Breast epithelium (tissue), 4 donors: ENCODE measurements at regions of chr3 and their contacts with region 1.

Region 1: GRCh38 chr3:38634111-38634510 is 15.4 kb downstream of the SCN5A start:
- DNase-seq: no peak
- H3K4me3 ChIP-seq: no peak overlapping the region
- H3K27ac ChIP-seq: no peak overlapping the region
- H3K4me1 ChIP-seq: no peaks in the 10 kb centered on the region
- H3K27me3 ChIP-seq: peaks cover 0 to 9% of the 10 kb centered on the region in 2 donors
- CTCF ChIP-seq: no peak
- POLR2A ChIP-seq: no peak

Region 2: GRCh38 chr3:38327335-38328009 is 306.6 kb before region 1 on chr3:
- intact Hi-C with region 1: no loop called
- DNase-seq: no peak
- H3K4me3 ChIP-seq: no peak overlapping the region
- H3K27ac ChIP-seq: no peak overlapping the region
- H3K4me1 ChIP-seq: no peaks in the 10 kb centered on the region
- H3K27me3 ChIP-seq: no peaks in the 10 kb centered on the region
- CTCF ChIP-seq: no peak
- POLR2A ChIP-seq: no peak

Region 3: GRCh38 chr3:38521391-38521987 is 112.6 kb before region 1 on chr3:
- intact Hi-C with region 1: loop called (anchors 10 kb)
- DNase-seq: peak; percentile 59 to 66
- H3K4me3 ChIP-seq: no peak overlapping the region
- H3K27ac ChIP-seq: no peak overlapping the region
- H3K4me1 ChIP-seq: no peaks in the 10 kb centered on the region
- H3K27me3 ChIP-seq: no peaks in the 10 kb centered on the region
- CTCF ChIP-seq: peak; percentile 71 to 84 (median 74)
- POLR2A ChIP-seq: no peak